ENCODE measurements at regions of chr13 and their contacts with region 1.

Region 1: GRCh38 chr13:48492470-48493065 is 40.3 kb downstream of the RCBTB2 start:
- DNase-seq: peak; percentile 74
- H3K4me3 Mint-ChIP-seq: no peak overlapping the region
- H3K27ac Mint-ChIP-seq: no peak overlapping the region
- H3K4me1 Mint-ChIP-seq: peaks cover 39% of the 10 kb centered on the region
- H3K27me3 Mint-ChIP-seq: no peaks in the 10 kb centered on the region

Region 2: DNA sequence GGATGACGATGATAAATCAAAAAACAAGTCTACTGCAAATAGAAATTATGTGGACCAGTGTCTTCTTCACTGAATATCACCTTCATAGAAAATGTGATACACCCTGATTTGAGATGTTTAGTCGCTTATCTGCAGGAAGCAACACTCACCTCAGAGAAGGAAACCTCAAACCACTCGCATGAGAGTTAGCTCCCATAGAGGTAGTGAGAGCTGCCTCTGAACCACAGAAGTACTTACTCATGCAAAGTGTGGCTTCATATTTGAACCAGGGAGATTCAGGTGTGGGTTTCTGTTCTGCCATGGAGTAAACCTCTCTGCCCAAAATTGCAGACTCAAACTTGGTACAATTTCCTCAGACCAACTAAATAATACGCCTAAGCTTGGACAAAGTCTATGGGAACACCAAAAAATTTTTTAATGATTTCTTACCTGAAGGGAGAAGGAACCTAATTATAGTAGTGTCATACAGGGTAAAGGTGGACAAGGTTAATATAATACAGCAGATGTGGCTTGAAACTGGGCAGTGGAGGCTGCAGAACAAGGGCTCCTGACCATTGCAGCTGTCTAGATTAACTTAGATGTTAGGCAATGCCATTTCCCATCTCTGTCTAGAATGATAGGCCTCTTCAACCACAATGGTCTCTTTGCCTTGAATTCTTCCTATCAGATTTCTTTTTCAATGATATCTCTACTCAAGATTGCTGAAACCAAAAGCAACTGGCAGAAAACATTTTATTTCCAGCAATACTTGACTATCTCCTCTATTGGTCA is 69.9 kb after region 1 on chr13:
- CTCF ChIA-PET with region 1: interaction called, 3 read pairs
- intact Hi-C with region 1: loop called (anchors 2 kb)
- DNase-seq: peak; percentile 76
- H3K4me3 Mint-ChIP-seq: no peak overlapping the region
- H3K27ac Mint-ChIP-seq: no peak overlapping the region
- H3K4me1 Mint-ChIP-seq: peaks cover 23% of the 10 kb centered on the region
- H3K27me3 Mint-ChIP-seq: peaks cover 47% of the 10 kb centered on the region

Region 3: DNA sequence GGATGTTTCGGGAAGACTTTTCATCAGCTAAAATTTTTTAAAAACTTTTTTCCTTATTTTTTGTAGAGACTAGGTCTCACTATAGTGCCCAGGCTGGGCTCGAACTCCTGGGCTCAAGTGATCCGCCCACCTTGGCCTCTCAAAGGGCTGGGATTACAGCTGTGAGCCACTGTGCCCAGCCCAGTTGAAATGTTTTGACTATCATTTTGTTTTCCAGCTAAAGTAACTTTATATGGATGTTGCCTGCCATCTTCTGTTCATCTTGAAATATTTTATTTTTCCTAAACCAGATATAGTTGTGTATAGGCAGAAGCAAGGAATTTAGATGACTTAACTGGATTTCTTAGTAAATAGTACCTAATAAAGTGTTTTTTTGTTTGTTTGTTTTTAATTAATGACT is 944.3 kb after region 1 on chr13:
- CTCF ChIA-PET with region 1: no interaction called
- intact Hi-C with region 1: no loop called
- DNase-seq: no peak
- H3K4me3 Mint-ChIP-seq: no peak overlapping the region
- H3K27ac Mint-ChIP-seq: no peak overlapping the region
- H3K4me1 Mint-ChIP-seq: peaks cover 9% of the 10 kb centered on the region
- H3K27me3 Mint-ChIP-seq: no peaks in the 10 kb centered on the region